Ovary (tissue), 10 donors: ENCODE measurements at regions of chr12 and their contacts with region 1.

Region 1: DNA sequence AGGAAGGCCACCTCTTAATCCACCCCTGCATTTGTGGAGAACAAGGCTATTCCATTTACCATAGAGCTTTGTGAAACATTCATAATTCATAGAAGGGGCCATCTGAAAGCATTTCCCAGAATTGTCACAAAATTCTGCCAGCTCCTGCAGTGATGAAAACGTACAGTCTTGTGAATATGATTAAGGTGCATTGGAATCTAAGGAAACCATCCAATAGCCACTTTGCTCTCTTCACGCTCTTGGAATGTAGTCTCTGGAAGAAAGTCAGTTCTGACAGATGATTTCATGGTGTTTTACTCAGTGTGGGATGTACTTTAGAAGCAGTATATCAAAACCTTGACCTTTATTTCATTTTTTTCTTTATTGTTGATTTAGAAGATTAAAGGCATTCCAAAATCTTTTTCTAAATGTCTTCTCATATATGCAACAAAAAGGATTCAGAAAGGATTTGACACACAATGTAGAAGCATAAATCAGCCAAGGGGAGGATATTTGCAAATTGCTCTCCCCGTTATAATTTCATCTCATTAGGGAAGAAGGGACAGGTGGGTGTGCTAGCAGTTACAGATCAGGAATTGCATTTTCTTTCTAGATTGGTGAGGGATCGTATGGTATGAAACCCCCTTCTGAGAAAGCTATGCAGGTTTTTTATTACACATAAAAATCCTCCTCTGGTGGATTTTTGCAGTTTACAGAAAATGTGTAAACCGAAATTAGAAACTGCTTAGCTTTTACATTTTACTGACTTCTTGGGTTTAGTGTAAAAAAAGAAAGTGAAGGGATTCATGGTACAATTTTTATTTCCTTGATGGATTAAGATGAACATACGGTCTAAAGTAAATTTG is 390.2 kb downstream of the LRIG3 start:
- DNase-seq: no peak
- H3K4me3 ChIP-seq: no peak overlapping the region
- H3K27ac ChIP-seq: no peak overlapping the region
- H3K4me1 ChIP-seq: no peaks in the 10 kb centered on the region
- H3K27me3 ChIP-seq: no peaks in the 10 kb centered on the region
- CTCF ChIP-seq: no peak
- EP300 ChIP-seq: no peak
- POLR2A ChIP-seq: no peak

Region 2: GRCh38 chr12:58288190-58288589 is 241.9 kb before region 1 on chr12:
- intact Hi-C with region 1: no loop called
- DNase-seq: no peak
- H3K4me3 ChIP-seq: no peak overlapping the region
- H3K27ac ChIP-seq: no peak overlapping the region
- H3K4me1 ChIP-seq: no peaks in the 10 kb centered on the region
- H3K27me3 ChIP-seq: no peaks in the 10 kb centered on the region
- CTCF ChIP-seq: no peak
- EP300 ChIP-seq: no peak
- POLR2A ChIP-seq: no peak

Region 3: GRCh38 chr12:58720421-58720820 is 190.3 kb after region 1 on chr12:
- intact Hi-C with region 1: no loop called
- DNase-seq: no peak
- H3K4me3 ChIP-seq: no peak overlapping the region
- H3K27ac ChIP-seq: no peak overlapping the region
- H3K4me1 ChIP-seq: no peaks in the 10 kb centered on the region
- H3K27me3 ChIP-seq: no peaks in the 10 kb centered on the region
- CTCF ChIP-seq: no peak
- EP300 ChIP-seq: no peak
- POLR2A ChIP-seq: no peak

Region 4: DNA sequence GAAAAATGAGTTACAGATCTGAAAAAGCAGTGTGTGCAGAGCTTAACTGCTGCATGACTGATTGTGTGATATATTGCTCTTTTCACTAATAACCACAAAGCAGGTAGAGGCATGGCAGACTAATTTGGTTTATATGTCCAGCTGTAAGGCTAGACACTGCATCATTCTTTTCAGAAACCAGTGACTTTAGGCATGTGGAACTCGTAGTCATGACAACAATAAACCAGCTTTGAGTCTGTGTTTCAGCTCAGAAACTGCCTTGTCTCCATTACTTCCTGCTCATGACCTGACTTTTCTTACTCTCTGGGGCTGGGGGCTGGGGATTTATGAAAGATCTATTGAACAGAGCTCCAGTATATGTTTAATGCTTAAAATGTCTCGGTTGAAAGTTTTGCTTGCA is 537.0 kb after region 1 on chr12:
- intact Hi-C with region 1: no loop called
- DNase-seq: no peak
- H3K4me3 ChIP-seq: no peak overlapping the region
- H3K27ac ChIP-seq: no peak overlapping the region
- H3K4me1 ChIP-seq: no peaks in the 10 kb centered on the region
- H3K27me3 ChIP-seq: no peaks in the 10 kb centered on the region
- CTCF ChIP-seq: no peak
- EP300 ChIP-seq: no peak
- POLR2A ChIP-seq: no peak

Region 5: DNA sequence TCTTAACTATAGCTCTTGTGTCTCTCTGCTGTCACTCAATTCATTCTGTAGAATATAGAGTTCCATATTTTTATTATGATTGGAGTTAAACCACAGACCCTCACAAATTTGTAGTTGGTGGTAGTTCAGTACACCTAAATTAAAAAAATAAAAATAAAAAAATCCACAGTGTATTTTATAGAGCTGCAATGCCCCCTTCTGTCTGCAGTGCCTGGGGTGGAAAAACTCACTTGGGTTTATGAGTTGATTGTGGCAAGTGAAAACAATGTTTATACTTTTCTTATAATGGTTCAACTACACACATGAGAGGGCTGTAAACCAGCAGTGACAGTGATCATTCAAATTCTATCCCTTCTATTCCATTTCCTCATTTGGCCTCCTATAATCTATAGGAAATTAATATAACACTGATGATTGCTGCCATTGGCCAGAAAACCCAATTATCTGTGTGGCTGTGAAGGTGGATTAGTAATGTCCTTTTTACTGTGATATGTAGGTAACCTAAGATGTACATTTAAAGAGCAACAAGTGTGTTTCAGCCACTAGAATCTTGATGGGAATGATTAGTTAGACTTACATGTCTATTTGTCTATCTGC is 557.1 kb after region 1 on chr12:
- intact Hi-C with region 1: loop called in 2 of 4 experiments (anchors 10 kb)
- DNase-seq: no peak
- H3K4me3 ChIP-seq: no peak overlapping the region
- H3K27ac ChIP-seq: no peak overlapping the region
- H3K4me1 ChIP-seq: no peaks in the 10 kb centered on the region
- H3K27me3 ChIP-seq: no peaks in the 10 kb centered on the region
- CTCF ChIP-seq: peak in 1 of 3 donors; percentile 11
- EP300 ChIP-seq: no peak
- POLR2A ChIP-seq: no peak

Region 6: GRCh38 chr12:59093073-59093772 is 563.1 kb after region 1 on chr12:
- intact Hi-C with region 1: loop called in 2 of 4 experiments (anchors 10 kb)
- DNase-seq: no peak
- H3K4me3 ChIP-seq: no peak overlapping the region
- H3K27ac ChIP-seq: no peak overlapping the region
- H3K4me1 ChIP-seq: no peaks in the 10 kb centered on the region
- H3K27me3 ChIP-seq: no peaks in the 10 kb centered on the region
- CTCF ChIP-seq: no peak
- EP300 ChIP-seq: no peak
- POLR2A ChIP-seq: no peak